Lower leg skin (tissue), 4 donors: ENCODE measurements at regions of chr5 and their contacts with region 1.

Region 1: GRCh38 chr5:102271759-102272158 is 24.3 kb downstream of the SLCO4C1 start:
- DNase-seq: no peak
- H3K4me3 ChIP-seq: no peak overlapping the region
- CTCF ChIP-seq: no peak
- POLR2A ChIP-seq: no peak

Region 2: GRCh38 chr5:104024538-104024937 is 1752.8 kb after region 1 on chr5:
- intact Hi-C with region 1: loop called (anchors 5 kb)
- DNase-seq: no peak
- H3K4me3 ChIP-seq: no peak overlapping the region
- CTCF ChIP-seq: no peak
- POLR2A ChIP-seq: no peak